ENCODE measurements at regions of chr1 and their contacts with region 1.

Region 1: DNA sequence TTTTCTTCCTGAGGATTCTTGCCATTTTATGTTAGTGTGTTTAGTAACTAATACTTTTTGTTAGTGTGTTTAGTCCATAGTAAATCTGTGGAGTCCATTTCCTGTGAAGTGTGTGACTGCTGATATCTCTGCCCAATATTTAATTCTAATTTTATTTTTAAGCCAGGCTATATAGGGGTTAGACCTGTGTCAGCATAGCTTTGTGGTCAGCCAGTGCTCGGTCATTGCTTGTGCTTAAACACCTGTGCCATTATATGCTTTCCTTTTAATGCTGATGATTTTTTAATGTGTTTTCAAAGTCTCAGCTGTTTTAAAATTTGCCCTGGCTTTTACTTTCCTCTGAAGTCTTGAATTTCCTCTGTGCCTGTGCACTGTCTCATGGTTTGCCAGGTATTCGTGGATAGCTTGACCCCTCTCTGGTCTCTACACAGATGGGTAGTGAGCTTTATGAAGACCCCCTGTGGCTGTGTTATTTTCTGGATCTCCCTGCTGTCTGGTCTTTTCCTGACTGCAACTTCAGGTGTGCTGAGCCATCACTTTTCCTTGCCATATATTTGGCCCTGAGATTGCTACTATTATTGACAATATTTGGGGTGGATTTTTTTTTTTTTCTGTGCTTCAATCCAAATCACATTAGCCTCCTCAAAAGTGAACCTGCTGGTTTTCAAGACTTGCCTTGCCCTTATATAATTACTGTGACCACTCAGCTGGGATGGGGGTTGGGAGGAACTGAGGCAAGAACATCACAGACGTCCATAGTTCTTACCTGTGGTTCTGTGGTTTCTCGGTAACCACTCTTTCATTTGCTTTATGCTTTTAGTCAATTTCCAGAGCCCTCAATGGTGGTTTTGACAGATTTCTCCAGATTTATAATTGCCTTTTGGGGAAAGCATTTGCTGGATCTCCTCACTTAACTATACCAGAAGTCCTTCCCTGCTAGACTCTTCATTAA is 59.6 kb downstream of the RPS6KC1 start:
- DNase-seq: no peak
- H3K4me3 Mint-ChIP-seq: no peak overlapping the region
- H3K27ac Mint-ChIP-seq: no peak overlapping the region
- H3K4me1 Mint-ChIP-seq: peaks cover 7% of the 10 kb centered on the region
- H3K27me3 Mint-ChIP-seq: no peaks in the 10 kb centered on the region

Region 2: DNA sequence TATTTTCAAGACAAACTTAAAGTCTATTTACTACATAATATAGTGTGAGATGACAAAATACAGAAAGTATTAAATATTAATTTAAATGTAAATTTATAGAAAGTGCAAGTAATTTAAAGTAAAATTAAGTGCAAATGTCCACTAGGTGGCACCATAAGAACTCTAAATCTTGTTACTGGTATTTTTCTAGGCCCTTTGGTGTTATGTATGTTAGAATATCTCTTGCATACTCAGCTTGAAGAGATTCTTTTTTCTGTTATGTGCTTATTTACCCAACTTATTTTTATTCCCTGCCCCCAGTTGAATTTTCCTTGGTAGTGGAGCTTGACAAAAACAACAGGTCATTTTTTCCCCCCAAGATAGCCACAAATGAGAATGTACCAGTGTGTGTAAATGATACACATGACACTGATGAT is 11.9 kb after region 1 on chr1:
- CTCF ChIA-PET with region 1: interaction called, 12 read pairs
- intact Hi-C with region 1: no loop called
- DNase-seq: no peak
- H3K4me3 Mint-ChIP-seq: no peak overlapping the region
- H3K27ac Mint-ChIP-seq: no peak overlapping the region
- H3K4me1 Mint-ChIP-seq: no peaks in the 10 kb centered on the region
- H3K27me3 Mint-ChIP-seq: no peaks in the 10 kb centered on the region

Measured in activated naive CD4-positive, alpha-beta T cell treated with anti-CD3 and anti-CD28 coated beads for 36 hours (primary cell).